ENCODE measurements at regions of chr16 and their contacts with region 1.

Region 1: DNA sequence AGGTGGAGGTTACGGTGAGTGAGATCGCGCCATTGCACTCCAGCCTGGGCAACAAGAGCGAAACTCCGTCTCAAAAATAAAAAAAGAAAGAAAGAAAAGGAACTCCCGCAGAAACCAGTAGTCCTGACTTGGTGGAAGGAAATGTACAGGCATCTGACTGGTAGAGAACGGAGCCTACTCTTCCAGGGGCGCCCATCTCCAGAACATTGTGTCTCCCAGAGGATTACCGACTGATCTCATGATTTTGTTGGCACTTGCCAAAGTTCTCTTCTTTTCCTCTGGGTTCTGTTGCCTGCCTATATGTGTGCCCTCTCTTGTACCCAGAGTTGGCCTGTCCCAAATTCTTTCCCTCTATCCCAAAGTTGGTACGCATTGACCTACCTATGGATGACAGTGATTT is 24.2 kb downstream of the DDX19A start:
- DNase-seq: no peak
- H3K4me3 Mint-ChIP-seq: no peak overlapping the region
- H3K27ac Mint-ChIP-seq: peak overlapping the region; percentile 16
- H3K4me1 Mint-ChIP-seq: peaks cover 4% of the 10 kb centered on the region
- H3K27me3 Mint-ChIP-seq: no peaks in the 10 kb centered on the region

Region 2: DNA sequence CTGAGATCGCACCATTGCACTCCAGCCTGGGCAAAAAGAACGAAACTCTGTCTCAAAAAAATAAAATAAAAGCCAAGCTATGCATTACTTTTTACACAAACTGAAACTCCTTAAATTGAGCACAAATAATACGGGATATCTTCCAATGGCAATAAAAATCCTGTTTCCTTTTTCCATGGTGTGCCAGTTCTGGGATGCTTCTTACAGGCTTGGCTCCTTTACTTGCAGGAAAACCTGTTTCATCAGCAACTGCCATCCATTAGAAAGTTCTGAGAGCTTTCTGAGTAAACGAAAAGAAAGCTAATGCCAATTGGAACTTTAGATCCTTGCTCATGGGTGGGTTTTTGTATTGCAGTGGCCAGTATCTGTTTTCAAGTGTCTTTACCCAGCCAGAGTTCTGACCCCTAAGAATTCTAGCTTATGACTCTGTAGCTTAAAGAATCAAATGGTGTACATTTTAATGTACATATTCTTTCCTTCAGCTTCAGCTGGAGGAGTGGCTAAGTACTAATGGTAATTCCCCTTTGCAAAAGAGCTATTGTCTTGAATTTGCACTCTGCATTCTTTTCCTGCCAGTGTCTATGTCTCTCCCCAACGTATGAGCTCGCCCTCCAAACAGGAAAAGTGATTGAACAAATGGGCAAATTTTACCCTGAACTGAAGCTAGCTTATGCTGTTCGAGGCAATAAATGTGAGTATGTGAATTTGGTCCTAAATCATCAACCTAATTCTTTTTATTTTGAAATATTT is 45.8 kb before region 1 on chr16:
- CTCF ChIA-PET with region 1: no interaction called
- DNase-seq: no peak
- H3K4me3 Mint-ChIP-seq: no peak overlapping the region
- H3K27ac Mint-ChIP-seq: no peak overlapping the region
- H3K4me1 Mint-ChIP-seq: no peaks in the 10 kb centered on the region
- H3K27me3 Mint-ChIP-seq: no peaks in the 10 kb centered on the region

Region 3: GRCh38 chr16:70380861-70381603 is 10.1 kb after region 1 on chr16:
- CTCF ChIA-PET with region 1: interaction called, 17 read pairs
- DNase-seq: peak; percentile 99
- H3K4me3 Mint-ChIP-seq: peak overlapping the region; percentile 90
- H3K27ac Mint-ChIP-seq: peak overlapping the region; percentile 93
- H3K4me1 Mint-ChIP-seq: peaks cover 21% of the 10 kb centered on the region
- H3K27me3 Mint-ChIP-seq: no peaks in the 10 kb centered on the region

Region 4: DNA sequence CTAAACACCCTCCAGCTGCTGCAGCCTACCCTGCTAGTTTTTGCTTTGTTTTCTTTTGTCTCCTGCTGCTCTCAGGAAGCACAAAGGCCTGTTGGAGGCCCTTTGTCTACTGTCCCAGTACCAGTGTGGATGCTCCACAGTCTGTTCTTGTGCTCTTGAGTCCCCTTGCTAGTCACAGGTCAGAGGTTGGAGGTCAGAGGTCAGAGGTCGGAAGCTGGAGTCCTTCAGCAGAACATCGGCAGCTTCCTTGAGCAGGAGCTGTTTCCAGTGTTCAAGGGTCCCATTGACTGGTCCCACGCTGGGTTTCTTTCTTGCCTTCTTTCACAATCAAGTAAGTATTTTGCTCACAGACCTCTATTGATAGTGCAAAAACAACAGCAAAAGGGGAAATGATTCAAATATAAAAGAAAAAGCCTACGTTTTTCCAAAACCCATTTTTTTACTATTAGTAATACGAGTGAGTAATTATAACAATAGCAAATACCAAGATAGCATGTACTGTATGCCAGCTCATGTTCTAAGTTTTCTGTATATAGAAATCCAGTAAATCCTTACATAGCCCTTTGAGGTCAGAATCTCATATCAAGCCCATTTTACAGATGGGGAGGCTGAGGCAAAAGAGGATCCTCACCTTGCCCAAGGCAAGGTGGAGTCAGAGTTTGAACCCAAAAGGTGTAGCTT is 264.6 kb after region 1 on chr16:
- CTCF ChIA-PET with region 1: no interaction called
- DNase-seq: no peak
- H3K4me3 Mint-ChIP-seq: no peak overlapping the region
- H3K27ac Mint-ChIP-seq: no peak overlapping the region
- H3K4me1 Mint-ChIP-seq: no peaks in the 10 kb centered on the region
- H3K27me3 Mint-ChIP-seq: peaks cover 15% of the 10 kb centered on the region

Measured in activated naive CD4-positive, alpha-beta T cell treated with anti-CD3 and anti-CD28 coated beads, Interleukin-2, amount 10 ng/mL, durations not matched to agents 7 days and 5 days (primary cell).